ENCODE measurements at regions of chrX and their contacts with region 1.

Region 1: GRCh38 chrX:57929373-57929772 is 19.1 kb upstream of the ZXDA start:
- DNase-seq: no peak
- H3K4me3 Mint-ChIP-seq: no peak overlapping the region
- H3K27ac Mint-ChIP-seq: no peak overlapping the region
- H3K4me1 Mint-ChIP-seq: peaks cover 3% of the 10 kb centered on the region
- H3K27me3 Mint-ChIP-seq: no peaks in the 10 kb centered on the region

Region 2: GRCh38 chrX:57595381-57595811 is 334.0 kb before region 1 on chrX:
- CTCF ChIA-PET with region 1: no interaction called
- POLR2A ChIA-PET with region 1: no interaction called
- intact Hi-C with region 1: loop called (anchors 5 kb)
- DNase-seq: no peak
- H3K4me3 Mint-ChIP-seq: peak overlapping the region; percentile 72
- H3K27ac Mint-ChIP-seq: peak overlapping the region; percentile 71
- H3K4me1 Mint-ChIP-seq: peaks cover 35% of the 10 kb centered on the region
- H3K27me3 Mint-ChIP-seq: no peaks in the 10 kb centered on the region

Measured in activated CD4-positive, alpha-beta memory T cell treated with anti-CD3 and anti-CD28 coated beads for 36 hours (primary cell).